Activated CD4-positive, alpha-beta memory T cell treated with anti-CD3 and anti-CD28 coated beads, Interleukin-2, amount 10 ng/mL, durations not matched to agents 7 days and 5 days (primary cell): ENCODE measurements at regions of chr17 and their contacts with region 1.

Region 1: GRCh38 chr17:57783106-57783742 is 38.1 kb upstream of the CCDC182 start:
- DNase-seq: peak; percentile 81
- H3K4me3 Mint-ChIP-seq: no peak overlapping the region
- H3K27ac Mint-ChIP-seq: no peak overlapping the region
- H3K4me1 Mint-ChIP-seq: no peaks in the 10 kb centered on the region
- H3K27me3 Mint-ChIP-seq: peaks cover 21% of the 10 kb centered on the region

Region 2: DNA sequence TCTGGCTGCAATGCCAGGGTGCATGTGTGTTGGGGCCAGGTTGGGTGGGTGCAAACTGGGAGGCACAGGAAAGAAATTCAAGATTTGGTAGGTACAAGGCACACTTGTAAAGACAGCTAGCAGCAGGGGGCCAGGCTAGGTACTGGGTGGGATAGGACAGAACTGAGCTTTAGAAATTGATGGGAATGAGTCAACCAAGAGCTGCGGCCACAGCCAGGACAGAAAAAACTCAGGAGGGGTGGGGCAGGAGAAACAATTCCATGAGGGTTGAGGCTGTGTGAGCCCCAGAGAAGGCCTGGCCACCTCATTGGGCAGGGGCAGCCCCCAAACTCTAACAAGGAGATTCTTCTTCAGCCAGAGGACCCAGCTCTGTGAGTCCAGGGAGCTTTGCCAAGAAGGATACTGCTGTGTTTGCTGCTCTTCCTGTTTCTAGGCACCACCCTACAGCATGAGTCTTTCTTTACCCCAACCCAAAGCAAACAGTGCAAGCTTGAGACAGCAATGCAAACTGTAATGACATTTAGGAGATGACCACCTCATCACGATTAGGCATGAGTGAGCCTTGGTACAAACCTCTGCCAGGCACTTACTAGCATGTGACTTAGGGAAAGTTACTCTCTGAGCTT is 16.8 kb before region 1 on chr17:
- CTCF ChIA-PET with region 1: interaction called, 20 read pairs
- POLR2A ChIA-PET with region 1: interaction called, 3 read pairs
- DNase-seq: no peak
- H3K4me3 Mint-ChIP-seq: no peak overlapping the region
- H3K27ac Mint-ChIP-seq: no peak overlapping the region
- H3K4me1 Mint-ChIP-seq: no peaks in the 10 kb centered on the region
- H3K27me3 Mint-ChIP-seq: peaks cover 32% of the 10 kb centered on the region

Region 3: GRCh38 chr17:57772774-57773173 is 10.4 kb before region 1 on chr17:
- CTCF ChIA-PET with region 1: interaction called, 20 read pairs
- POLR2A ChIA-PET with region 1: no interaction called
- DNase-seq: no peak
- H3K4me3 Mint-ChIP-seq: no peak overlapping the region
- H3K27ac Mint-ChIP-seq: no peak overlapping the region
- H3K4me1 Mint-ChIP-seq: no peaks in the 10 kb centered on the region
- H3K27me3 Mint-ChIP-seq: peaks cover 69% of the 10 kb centered on the region

Region 4: DNA sequence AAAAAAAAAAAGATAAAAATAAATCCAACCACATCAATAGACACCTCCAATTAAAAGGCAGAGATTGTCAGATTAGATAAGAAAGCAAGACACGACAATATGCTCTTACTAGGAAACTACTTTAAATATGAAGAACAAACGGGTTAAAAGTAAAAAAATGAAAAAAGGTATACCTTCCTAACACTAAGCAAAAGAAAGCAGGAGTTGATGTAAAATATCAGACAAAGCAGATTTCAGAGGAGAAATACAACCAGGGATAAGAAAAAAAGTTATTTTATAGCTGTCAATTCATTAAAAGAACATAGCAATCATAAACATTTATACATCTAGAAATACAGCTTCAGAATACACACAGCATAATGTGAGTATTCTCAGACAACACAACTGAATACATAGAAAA is 11.6 kb after region 1 on chr17:
- CTCF ChIA-PET with region 1: interaction called, 18 read pairs
- POLR2A ChIA-PET with region 1: no interaction called
- DNase-seq: no peak
- H3K4me3 Mint-ChIP-seq: no peak overlapping the region
- H3K27ac Mint-ChIP-seq: no peak overlapping the region
- H3K4me1 Mint-ChIP-seq: no peaks in the 10 kb centered on the region
- H3K27me3 Mint-ChIP-seq: peaks cover 35% of the 10 kb centered on the region

Region 5: GRCh38 chr17:57833179-57833939 is 50.1 kb after region 1 on chr17:
- CTCF ChIA-PET with region 1: interaction called, 24 read pairs
- POLR2A ChIA-PET with region 1: no interaction called
- DNase-seq: peak; percentile 75
- H3K4me3 Mint-ChIP-seq: no peak overlapping the region
- H3K27ac Mint-ChIP-seq: no peak overlapping the region
- H3K4me1 Mint-ChIP-seq: peaks cover 14% of the 10 kb centered on the region
- H3K27me3 Mint-ChIP-seq: peaks cover 3% of the 10 kb centered on the region